ENCODE measurements at regions of chr11 and their contacts with region 1.

Region 1: DNA sequence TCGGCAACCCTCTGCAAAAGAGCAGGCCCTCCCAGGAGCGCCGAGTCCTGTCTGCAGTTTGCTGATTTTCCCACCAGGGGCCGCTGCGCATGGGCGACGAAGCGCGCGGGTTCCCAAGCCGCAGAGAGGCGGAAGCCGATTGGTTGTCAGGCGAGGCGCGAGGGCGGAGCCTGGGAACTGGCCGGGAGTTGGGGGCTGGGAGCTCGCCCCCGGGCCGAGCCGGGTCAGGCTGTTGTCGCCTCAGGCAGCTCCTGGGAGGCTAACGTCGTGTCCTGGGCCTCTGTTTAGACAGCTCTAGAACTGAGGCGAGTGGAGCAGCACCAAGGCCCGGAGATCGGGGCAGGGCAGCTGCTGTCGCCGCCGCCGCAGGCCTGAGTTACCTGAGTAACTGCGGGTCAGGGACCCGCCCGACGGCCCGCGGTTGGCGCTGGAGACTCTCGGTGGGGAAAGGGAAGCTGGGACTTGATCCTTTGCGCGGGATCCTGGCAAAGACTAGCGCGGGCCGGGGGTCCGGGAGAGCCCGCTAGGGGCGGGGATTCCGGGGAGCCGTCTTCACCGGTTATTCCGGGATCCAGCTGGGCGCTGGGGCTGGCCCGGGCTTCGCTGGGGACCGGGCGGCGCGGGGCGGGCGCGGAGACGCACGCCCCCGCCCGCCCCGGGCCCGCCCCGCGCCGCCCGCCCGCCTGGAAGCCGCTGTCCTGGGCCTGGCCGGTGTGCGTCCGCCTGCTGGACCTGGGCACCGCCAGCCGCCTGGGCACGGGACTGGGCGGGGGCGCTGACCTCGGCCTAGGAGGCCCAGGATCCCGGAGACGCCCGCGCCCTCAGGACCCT is at the start of gene STIM1:
- DNase-seq: peak; percentile 83
- H3K4me3 ChIP-seq: peak within 1 kb of the TSS; percentile 85
- H3K27ac ChIP-seq: peak within 1 kb of the TSS; percentile 73
- H3K27me3 ChIP-seq: no peaks in the 10 kb centered on the region
- CTCF ChIP-seq: peak; percentile 87
- polyA plus RNA-seq, gene STIM1: 19.7 and 23.4 TPM in 2 replicates

Region 2: DNA sequence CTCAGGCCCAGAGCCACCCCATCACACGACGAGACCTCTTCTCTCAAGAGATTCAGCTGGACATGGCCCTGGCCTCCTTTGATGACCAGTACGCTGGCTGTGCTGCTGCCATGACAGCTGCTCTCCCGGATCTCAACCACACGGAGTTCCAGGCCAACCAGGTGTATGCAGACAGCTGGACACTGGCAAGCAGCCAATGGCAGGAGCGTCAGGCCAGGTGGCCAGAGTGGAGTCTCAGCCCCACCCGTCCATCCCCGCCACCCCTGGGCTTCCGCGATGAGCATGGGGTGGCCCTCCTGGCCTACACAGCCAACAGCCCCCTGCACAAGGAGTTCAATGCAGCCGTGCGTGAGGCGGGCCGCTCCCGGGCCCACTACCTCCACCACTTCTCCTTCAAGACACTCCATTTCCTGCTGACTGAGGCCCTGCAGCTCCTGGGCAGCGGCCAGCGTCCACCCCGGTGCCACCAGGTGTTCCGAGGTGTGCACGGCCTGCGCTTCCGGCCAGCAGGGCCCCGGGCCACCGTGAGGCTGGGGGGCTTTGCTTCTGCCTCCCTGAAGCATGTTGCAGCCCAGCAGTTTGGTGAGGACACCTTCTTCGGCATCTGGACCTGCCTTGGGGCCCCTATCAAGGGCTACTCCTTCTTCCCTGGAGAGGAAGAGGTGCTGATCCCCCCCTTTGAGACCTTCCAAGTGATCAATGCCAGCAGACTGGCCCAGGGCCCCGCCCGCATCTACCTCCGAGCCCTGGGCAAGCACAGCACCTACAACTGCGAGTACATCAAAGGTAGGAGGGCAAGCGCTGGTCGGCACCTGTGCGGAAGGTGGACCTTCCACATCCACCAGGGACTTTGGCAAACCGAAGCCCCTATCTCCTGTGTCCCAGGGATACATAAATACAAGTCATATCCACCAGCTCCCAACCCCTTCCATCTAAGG is 195.3 kb before region 1 on chr11:
- CTCF ChIA-PET with region 1: no interaction called
- POLR2A ChIA-PET with region 1: no interaction called
- DNase-seq: no peak
- H3K4me3 ChIP-seq: no peak overlapping the region
- H3K27ac ChIP-seq: no peak overlapping the region
- H3K27me3 ChIP-seq: peaks cover 6% of the 10 kb centered on the region
- CTCF ChIP-seq: no peak

Region 3: DNA sequence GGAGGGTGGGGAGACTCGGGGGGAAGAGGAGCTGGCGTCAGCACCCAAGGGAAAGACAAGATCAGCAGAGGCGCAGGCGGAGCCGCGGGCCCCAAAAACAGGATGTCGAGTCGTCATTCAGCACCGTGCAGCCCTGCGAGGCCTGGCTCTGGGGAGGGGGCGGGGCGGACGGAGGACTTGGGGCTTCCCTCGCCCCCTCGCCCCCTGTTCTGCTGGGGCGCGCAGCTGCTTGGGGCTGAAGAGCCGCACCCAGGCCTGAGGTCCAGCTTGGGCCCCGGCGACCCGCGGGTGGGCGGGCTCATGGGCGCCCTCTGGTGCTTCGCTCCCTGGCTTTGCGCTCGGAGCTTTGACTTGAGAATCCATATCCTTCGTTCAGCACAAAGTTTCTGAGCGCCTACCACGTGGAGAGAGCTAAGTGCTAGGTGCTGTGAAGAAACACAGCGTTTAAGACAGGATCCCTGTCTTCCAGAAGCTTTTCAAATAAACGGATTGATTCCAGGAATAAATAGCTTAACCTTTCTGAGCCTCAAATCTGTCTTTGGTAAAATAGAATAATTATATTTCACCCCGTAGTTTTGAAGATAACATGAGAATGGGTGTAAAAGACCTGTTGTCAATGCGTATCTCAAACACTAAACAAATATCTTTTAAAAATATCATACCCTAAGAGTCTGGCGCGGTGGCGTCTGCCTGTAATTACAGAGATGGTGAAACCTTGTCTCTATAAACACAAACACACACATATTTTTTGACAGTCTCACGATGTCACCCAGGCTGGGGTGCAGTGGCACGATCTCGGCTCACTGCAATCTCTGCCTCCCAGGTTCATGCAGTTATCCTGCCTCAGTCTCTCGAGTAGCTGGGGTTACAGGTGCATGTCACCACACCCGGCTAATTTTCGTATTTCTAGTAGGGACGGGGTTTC is 13.5 kb before region 1 on chr11:
- CTCF ChIA-PET with region 1: interaction called, 150 read pairs
- POLR2A ChIA-PET with region 1: interaction called, 21 read pairs
- DNase-seq: peak; percentile 38
- H3K4me3 ChIP-seq: peak overlapping the region; percentile 72
- H3K27ac ChIP-seq: peak overlapping the region; percentile 89
- H3K27me3 ChIP-seq: no peaks in the 10 kb centered on the region
- CTCF ChIP-seq: peak; percentile 84

Region 4: GRCh38 chr11:3879216-3879966 is 24.2 kb after region 1 on chr11:
- CTCF ChIA-PET with region 1: interaction called, 10 read pairs
- POLR2A ChIA-PET with region 1: no interaction called
- DNase-seq: no peak
- H3K4me3 ChIP-seq: no peak overlapping the region
- H3K27ac ChIP-seq: no peak overlapping the region
- H3K27me3 ChIP-seq: no peaks in the 10 kb centered on the region
- CTCF ChIP-seq: no peak

Region 5: GRCh38 chr11:3939211-3939610 is 84.0 kb after region 1 on chr11:
- CTCF ChIA-PET with region 1: interaction called, 15 read pairs
- POLR2A ChIA-PET with region 1: interaction called, 4 read pairs
- DNase-seq: peak; percentile 84
- H3K4me3 ChIP-seq: no peak overlapping the region
- H3K27ac ChIP-seq: no peak overlapping the region
- H3K27me3 ChIP-seq: no peaks in the 10 kb centered on the region
- CTCF ChIP-seq: no peak

Region 6: GRCh38 chr11:3984896-3985295 is 129.7 kb after region 1 on chr11:
- CTCF ChIA-PET with region 1: interaction called, 41 read pairs
- POLR2A ChIA-PET with region 1: interaction called, 3 read pairs
- DNase-seq: no peak
- H3K4me3 ChIP-seq: no peak overlapping the region
- H3K27ac ChIP-seq: no peak overlapping the region
- H3K27me3 ChIP-seq: no peaks in the 10 kb centered on the region
- CTCF ChIP-seq: no peak

Region 7: DNA sequence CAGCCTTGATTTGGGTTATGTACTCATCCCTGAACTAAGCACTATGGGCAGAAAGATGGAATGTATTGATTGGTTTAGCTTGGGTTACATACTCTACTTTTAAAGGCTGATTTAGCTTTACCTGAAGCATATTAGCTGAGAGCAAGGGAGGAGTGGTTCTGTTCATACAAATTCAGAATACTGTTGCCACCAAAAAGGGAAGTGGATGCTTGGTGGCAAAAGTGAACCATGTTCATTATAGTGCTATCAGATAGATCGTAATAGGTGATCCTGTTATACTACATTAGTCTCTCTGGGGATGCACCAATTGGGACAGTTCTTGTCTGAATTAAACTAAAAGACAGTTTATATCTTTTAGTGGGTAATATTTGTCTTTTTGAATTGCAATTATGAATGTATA is 194.9 kb after region 1 on chr11:
- CTCF ChIA-PET with region 1: interaction called, 47 read pairs
- POLR2A ChIA-PET with region 1: no interaction called
- DNase-seq: no peak
- H3K4me3 ChIP-seq: no peak overlapping the region
- H3K27ac ChIP-seq: no peak overlapping the region
- H3K27me3 ChIP-seq: no peaks in the 10 kb centered on the region
- CTCF ChIP-seq: no peak

Measured in AG04450 (cell line).